ENCODE measurements at regions of chr2 and their contacts with region 1.

Region 1: GRCh38 chr2:152635635-152636298 is 81.5 kb downstream of the PRPF40A start:
- DNase-seq: peak; percentile 24
- ATAC-seq: peak; percentile 76; the same call in 1 of the 2 replicates
- H3K4me3 ChIP-seq: no peak overlapping the region
- H3K27ac ChIP-seq: no peak overlapping the region
- H3K4me1 ChIP-seq: no peaks in the 10 kb centered on the region
- H3K27me3 ChIP-seq: no peaks in the 10 kb centered on the region
- CTCF ChIP-seq: peak; percentile 88

Region 2: GRCh38 chr2:152036611-152037469 is 598.9 kb before region 1 on chr2:
- CTCF ChIA-PET with region 1: no interaction called
- POLR2A ChIA-PET with region 1: no interaction called
- in situ Hi-C with region 1: no loop called
- intact Hi-C with region 1: loop called (anchors 5 kb)
- DNase-seq: peak; percentile 61
- ATAC-seq: peak; percentile 91
- H3K4me3 ChIP-seq: no peak overlapping the region
- H3K27ac ChIP-seq: no peak overlapping the region
- H3K4me1 ChIP-seq: no peaks in the 10 kb centered on the region
- H3K27me3 ChIP-seq: no peaks in the 10 kb centered on the region
- CTCF ChIP-seq: peak; percentile 90

Region 3: GRCh38 chr2:152175458-152176325 is 460.1 kb before region 1 on chr2 and contains the start of gene STAM2:
- CTCF ChIA-PET with region 1: interaction called, 17 read pairs
- POLR2A ChIA-PET with region 1: no interaction called
- in situ Hi-C with region 1: no loop called
- intact Hi-C with region 1: loop called (anchors 2 kb)
- DNase-seq: peak; percentile 74
- ATAC-seq: peak; percentile 92
- H3K4me3 ChIP-seq: peak within 1 kb of the TSS; percentile 96 to 97
- H3K27ac ChIP-seq: peak within 1 kb of the TSS; percentile 97
- H3K4me1 ChIP-seq: peaks cover 29% of the 10 kb centered on the region
- H3K27me3 ChIP-seq: no peaks in the 10 kb centered on the region
- CTCF ChIP-seq: peak; percentile 95
- total RNA-seq, gene STAM2: 29.1 TPM

Region 4: DNA sequence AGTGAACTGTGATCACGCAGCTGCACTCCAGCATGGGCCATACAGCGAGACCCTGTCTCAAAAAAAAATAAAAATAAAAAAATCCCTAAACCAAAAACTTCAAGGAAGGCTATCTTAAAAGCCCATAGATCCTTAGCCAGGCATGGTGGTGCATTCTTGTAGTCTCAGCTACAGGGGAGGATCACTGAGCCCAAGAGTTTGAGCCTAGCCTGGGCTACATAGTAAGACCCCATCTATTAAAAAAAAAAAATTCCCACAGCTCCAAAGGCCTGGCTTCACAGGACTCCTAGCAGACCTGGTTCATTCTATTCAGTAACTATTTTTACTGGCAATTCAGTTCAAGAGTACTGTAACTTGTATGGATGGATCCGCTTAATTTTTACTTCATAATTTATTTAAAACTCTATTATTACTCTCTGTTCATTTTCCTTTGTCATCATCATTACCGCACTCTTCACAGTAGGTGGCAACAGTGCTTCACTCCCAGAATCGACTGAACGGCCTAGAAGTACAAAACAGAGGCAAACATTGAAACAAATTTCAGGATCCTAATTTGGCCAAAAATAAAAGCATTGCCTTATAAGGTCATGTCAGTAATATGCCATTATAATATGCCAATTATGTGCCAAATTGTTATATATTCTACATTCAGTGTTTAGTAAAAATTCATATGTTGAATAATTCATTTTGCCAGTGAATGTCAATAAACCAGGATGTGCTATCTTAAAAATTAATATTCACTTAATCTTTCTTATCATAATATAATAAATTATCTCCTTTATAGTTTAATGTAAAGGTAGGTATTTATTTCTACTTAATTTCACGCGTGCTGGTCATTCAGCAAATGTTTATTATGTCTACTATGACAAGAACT is 445.9 kb before region 1 on chr2:
- CTCF ChIA-PET with region 1: interaction called, 6 read pairs
- POLR2A ChIA-PET with region 1: no interaction called
- in situ Hi-C with region 1: no loop called
- intact Hi-C with region 1: loop called (anchors 5 kb)
- DNase-seq: no peak
- ATAC-seq: peak; percentile 93
- H3K4me3 ChIP-seq: no peak overlapping the region
- H3K27ac ChIP-seq: no peak overlapping the region
- H3K4me1 ChIP-seq: no peaks in the 10 kb centered on the region
- H3K27me3 ChIP-seq: no peaks in the 10 kb centered on the region
- CTCF ChIP-seq: peak; percentile 85

Region 5: GRCh38 chr2:152322222-152322621 is 313.5 kb before region 1 on chr2:
- CTCF ChIA-PET with region 1: no interaction called
- POLR2A ChIA-PET with region 1: no interaction called
- in situ Hi-C with region 1: no loop called
- intact Hi-C with region 1: no loop called
- DNase-seq: no peak
- ATAC-seq: no peak
- H3K4me3 ChIP-seq: no peak overlapping the region
- H3K27ac ChIP-seq: no peak overlapping the region
- H3K4me1 ChIP-seq: no peaks in the 10 kb centered on the region
- H3K27me3 ChIP-seq: no peaks in the 10 kb centered on the region
- CTCF ChIP-seq: no peak

Region 6: DNA sequence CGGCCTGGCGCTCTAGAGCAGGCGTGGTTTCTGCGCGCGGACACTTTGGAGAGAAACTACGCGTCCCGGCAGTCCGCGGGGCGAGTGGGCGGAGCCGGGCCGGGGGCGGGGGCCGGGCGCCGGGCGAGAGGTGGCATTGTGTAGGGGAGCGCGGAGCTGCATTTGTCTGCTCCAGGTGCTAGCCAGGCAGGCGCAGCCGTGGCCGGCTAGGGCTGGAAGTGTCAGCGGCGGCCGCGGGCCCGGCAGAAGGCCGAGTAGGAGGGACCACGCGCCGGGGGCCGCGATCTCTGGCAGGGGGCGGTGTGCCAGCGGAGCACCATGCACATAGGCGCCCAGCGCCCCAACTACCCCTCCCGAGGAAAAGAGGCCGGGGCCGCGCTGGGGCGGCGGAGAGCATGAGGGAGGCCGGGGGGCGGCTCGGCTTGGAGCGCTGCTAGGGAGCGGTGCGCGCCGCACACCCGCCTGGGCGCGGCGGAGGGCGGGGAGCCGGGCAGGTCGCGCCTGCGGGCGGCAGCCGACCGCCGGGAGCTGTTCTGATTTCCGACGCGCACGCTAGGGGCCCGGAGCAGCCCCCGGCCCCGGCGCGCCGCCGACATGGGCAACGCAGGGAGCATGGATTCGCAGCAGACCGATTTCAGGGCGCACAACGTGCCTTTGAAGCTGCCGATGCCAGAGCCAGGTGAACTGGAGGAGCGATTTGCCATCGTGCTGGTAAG is 300.6 kb before region 1 on chr2 and contains the start of gene FMNL2:
- CTCF ChIA-PET with region 1: no interaction called
- POLR2A ChIA-PET with region 1: no interaction called
- in situ Hi-C with region 1: no loop called
- intact Hi-C with region 1: loop called (anchors 10 kb)
- DNase-seq: no peak
- ATAC-seq: peak; percentile 92
- H3K4me3 ChIP-seq: peak within 1 kb of the TSS; percentile 75 to 88
- H3K27ac ChIP-seq: peak within 1 kb of the TSS; percentile 88
- H3K4me1 ChIP-seq: peaks cover 13% of the 10 kb centered on the region
- H3K27me3 ChIP-seq: no peaks in the 10 kb centered on the region
- CTCF ChIP-seq: peak; percentile 29; the same call in 1 of the 2 replicates
- total RNA-seq, gene FMNL2: 33.6 TPM

Region 7: DNA sequence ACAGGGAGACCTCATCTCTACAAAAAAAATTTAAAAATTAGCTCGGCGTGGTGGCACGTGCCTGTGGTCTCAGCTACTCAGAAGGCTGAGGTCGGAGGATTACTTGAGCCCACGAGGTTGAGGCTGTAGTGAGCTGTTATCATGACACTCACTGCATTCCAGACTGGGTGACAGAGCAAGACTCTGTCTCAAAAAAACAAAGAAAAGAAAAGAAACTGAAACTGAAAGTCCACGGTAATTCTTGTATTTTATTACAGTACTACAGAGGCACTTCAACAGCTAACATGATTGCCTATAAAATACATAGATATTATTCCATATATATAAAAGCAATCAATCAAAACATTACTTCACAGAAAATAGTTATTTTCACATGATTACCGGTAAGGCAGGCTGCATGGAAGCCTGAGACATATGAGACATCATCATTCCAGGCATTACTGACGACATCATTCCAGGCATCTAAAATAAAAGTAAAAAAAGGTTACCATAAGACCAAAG is 58.4 kb after region 1 on chr2:
- CTCF ChIA-PET with region 1: no interaction called
- POLR2A ChIA-PET with region 1: no interaction called
- in situ Hi-C with region 1: no loop called
- intact Hi-C with region 1: no loop called
- DNase-seq: peak; percentile 20
- ATAC-seq: peak; percentile 75
- H3K4me3 ChIP-seq: peak overlapping the region; percentile 10 to 41
- H3K27ac ChIP-seq: peak overlapping the region; percentile 44
- H3K4me1 ChIP-seq: peaks cover 17% of the 10 kb centered on the region; the same call in 1 of the 2 replicates
- H3K27me3 ChIP-seq: no peaks in the 10 kb centered on the region
- CTCF ChIP-seq: no peak

Region 8: DNA sequence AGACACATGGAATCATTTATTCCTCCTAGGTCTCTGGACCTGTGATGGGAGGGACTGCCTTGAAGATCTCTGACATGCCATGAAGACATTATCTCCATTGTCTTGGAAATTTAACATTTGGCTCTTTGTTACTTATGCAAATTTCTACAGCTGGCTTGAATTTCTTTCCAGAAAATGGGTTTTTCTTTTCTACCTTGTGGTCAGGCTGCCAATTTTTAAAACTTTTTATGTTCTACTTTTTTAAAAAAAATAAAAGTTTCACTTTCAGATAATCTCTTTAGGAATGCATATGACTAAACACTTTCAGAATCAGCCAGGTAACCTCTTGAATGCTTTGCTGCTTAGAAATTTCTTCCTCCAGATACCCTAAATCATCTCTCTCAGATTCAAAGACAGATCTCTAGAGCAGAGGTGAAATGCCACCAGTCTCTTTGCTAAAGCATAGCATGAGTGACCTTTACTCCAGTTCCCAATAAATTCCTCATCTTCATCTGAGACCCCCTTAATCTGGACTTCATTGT is 633.2 kb after region 1 on chr2:
- CTCF ChIA-PET with region 1: no interaction called
- POLR2A ChIA-PET with region 1: no interaction called
- in situ Hi-C with region 1: no loop called
- intact Hi-C with region 1: no loop called
- DNase-seq: no peak
- ATAC-seq: no peak
- H3K4me3 ChIP-seq: no peak overlapping the region
- H3K27ac ChIP-seq: no peak overlapping the region
- H3K4me1 ChIP-seq: no peaks in the 10 kb centered on the region
- H3K27me3 ChIP-seq: no peaks in the 10 kb centered on the region
- CTCF ChIP-seq: no peak

Measured in Panc1 (cell line).